ENCODE measurements at regions of chr17 and their contacts with region 1.

Region 1: GRCh38 chr17:42527273-42527703 is 8.8 kb upstream of the NAGLU start:
- DNase-seq: peak; percentile 90
- H3K4me3 ChIP-seq: no peak overlapping the region
- H3K27ac ChIP-seq: peak overlapping the region; percentile 32
- H3K4me1 ChIP-seq: peaks cover 19% of the 10 kb centered on the region
- H3K27me3 ChIP-seq: no peaks in the 10 kb centered on the region
- CTCF ChIP-seq: peak; percentile 85 to 86
- POLR2A ChIP-seq: no peak

Region 2: DNA sequence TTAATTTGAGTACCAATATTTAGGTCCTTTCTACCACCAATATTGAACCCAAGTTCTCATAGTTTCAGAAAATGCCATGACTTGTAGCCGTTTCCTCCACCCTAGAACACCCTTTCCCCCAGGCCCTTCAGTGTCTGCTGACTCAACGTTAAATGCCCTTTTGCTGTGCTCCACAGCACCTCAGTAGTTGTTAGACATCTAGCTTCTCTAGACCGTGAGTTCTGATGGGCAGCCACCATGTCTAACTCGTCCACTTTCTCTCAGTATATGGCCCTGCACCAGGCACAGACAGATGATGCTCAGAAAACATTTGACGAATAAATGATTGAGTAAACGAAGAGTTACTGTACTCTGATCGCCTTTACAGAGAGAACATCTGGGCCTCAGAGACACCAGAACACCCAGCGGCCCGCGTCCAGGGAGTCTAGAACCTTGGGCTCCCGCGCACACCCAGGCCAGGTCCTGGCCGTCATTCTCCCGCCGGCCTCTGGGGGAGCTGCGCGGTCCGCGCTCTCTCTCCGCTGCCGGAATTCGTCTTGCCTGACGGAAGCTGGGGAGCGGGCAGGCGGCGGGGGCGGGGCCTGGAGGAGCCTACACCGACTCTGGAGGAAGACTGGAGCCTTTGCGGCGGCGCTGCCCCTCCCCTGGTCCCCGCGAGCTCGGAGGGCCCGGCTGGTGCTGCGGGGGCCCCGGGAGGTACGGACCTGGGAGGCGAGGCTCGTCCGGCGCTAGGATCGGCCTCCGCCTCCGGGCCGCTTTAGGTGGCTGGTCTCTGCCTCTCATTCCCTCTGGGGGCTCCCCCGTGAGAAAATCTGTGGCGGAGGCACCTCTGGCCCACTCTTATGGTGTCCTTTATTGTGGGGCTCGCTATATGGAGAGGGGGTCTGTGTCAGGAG is 507.5 kb before region 1 on chr17 and contains the start of gene NKIRAS2:
- CTCF ChIA-PET with region 1: no interaction called
- POLR2A ChIA-PET with region 1: no interaction called
- dilution Hi-C with region 1: no loop called
- intact Hi-C with region 1: loop called (anchors 10 kb)
- DNase-seq: peak; percentile 89
- H3K4me3 ChIP-seq: peak within 1 kb of the TSS; percentile 89 to 96 (median 93)
- H3K27ac ChIP-seq: peak within 1 kb of the TSS; percentile 86
- H3K4me1 ChIP-seq: peaks cover 24% of the 10 kb centered on the region
- H3K27me3 ChIP-seq: no peaks in the 10 kb centered on the region
- CTCF ChIP-seq: peak; percentile 91 to 96
- POLR2A ChIP-seq: peak; percentile 92
- total RNA-seq, gene NKIRAS2: 57.3 and 60.4 TPM in 2 replicates

Region 3: GRCh38 chr17:42132941-42133340 is 394.3 kb before region 1 on chr17:
- CTCF ChIA-PET with region 1: no interaction called
- POLR2A ChIA-PET with region 1: no interaction called
- dilution Hi-C with region 1: no loop called
- intact Hi-C with region 1: loop called (anchors 10 kb)
- DNase-seq: peak; percentile 48
- H3K4me3 ChIP-seq: peak overlapping the region in 1 of 3 experiments; percentile 44
- H3K27ac ChIP-seq: peak overlapping the region; percentile 71
- H3K4me1 ChIP-seq: peaks cover 79% of the 10 kb centered on the region
- H3K27me3 ChIP-seq: no peaks in the 10 kb centered on the region
- CTCF ChIP-seq: no peak
- POLR2A ChIP-seq: no peak

Region 4: DNA sequence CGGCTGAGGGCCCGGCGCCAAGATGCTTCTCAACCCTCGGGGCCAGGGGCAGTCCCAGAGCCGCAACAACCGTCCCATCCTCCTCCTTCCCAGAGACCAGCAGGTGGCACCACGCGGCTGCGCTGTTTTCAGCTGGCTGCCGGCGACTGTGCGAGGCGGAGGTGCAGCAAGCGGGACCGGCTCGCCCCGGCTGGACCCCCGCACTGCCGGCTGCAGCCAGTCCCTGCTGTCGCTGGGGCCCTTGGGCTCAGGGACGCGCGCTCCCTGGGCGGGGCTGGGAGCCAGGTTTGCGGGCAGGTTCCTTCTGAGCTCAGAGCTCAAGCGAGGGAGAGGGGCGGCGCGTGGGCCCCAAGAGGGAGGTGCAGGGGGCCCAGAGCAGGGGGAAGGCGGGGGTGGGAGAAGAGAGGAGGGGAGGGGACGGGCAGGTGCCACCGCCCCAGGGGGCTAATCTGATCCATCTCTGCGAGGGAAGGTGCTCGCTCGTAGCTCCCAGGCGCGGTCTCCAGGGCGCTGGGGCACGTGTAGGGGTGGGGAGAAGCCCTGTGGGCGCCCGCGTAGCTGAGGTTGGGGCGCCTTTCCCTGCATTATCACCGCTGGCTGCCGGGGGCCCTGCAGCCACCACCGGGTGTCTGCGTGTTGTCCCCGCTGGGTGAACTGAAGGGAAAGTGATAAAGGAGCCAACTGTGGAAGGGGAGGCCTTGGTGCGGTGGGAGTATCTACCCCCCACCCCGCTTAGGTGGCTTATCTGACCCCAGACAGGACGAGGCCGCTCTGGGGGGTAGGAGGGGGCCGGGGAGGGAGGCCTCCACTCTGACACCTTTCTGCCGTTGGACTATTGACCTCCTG is 214.8 kb before region 1 on chr17:
- CTCF ChIA-PET with region 1: interaction called, 50 read pairs
- POLR2A ChIA-PET with region 1: interaction called, 4 read pairs
- dilution Hi-C with region 1: no loop called
- intact Hi-C with region 1: no loop called
- DNase-seq: peak; percentile 85
- H3K4me3 ChIP-seq: no peak overlapping the region
- H3K27ac ChIP-seq: no peak overlapping the region
- H3K4me1 ChIP-seq: peaks cover 43% of the 10 kb centered on the region
- H3K27me3 ChIP-seq: no peaks in the 10 kb centered on the region
- CTCF ChIP-seq: peak; percentile 67 to 88
- POLR2A ChIP-seq: no peak

Region 5: GRCh38 chr17:42405963-42406495 is 121.3 kb before region 1 on chr17:
- CTCF ChIA-PET with region 1: interaction called, 59 read pairs
- POLR2A ChIA-PET with region 1: interaction called, 5 read pairs
- dilution Hi-C with region 1: no loop called
- intact Hi-C with region 1: loop called (anchors 1 kb)
- DNase-seq: peak; percentile 80
- H3K4me3 ChIP-seq: no peak overlapping the region
- H3K27ac ChIP-seq: no peak overlapping the region
- H3K4me1 ChIP-seq: peaks cover 58% of the 10 kb centered on the region
- H3K27me3 ChIP-seq: no peaks in the 10 kb centered on the region
- CTCF ChIP-seq: peak; percentile 75 to 85
- POLR2A ChIP-seq: no peak

Region 6: DNA sequence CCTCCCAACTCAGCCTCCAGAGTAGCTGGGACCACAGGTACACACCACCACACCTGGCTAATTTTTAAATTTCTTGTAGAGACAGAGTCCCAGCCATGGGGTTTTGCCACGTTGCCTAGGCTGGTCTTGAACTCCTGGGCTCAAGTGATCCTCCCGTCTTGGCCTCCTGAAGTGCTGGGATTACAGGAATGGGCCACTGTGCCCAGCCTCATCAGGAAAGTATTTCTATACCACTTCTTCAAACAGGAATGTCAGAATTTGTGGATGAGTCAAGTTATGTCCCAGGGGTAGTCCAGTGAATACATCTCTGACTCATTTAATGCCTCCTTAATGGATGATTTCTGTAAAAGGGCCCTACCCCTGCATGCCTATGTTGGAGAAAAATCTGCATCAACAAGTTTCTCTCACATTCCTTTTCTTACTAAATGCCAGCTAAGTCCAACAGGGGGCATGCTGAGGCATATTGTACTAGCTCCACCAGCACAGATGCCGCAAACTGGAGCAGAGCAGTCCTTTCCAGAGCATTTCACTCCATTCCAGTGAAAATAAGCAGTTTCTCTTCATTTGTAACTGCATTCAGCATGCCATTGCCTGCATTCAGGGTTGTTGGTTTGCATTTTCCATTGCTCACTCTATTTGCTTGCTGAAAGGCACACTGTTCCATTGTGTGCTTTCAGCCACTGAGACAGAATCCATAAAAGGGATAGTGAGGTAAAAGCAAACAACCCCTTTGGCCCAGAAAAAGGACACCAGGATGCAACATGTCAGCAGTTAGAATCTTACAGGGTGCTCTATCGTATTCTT is 98.9 kb before region 1 on chr17:
- CTCF ChIA-PET with region 1: interaction called, 23 read pairs
- POLR2A ChIA-PET with region 1: interaction called, 6 read pairs
- dilution Hi-C with region 1: no loop called
- intact Hi-C with region 1: loop called (anchors 1 kb)
- DNase-seq: peak; percentile 85
- H3K4me3 ChIP-seq: no peak overlapping the region
- H3K27ac ChIP-seq: no peak overlapping the region
- H3K4me1 ChIP-seq: peaks cover 5% of the 10 kb centered on the region
- H3K27me3 ChIP-seq: no peaks in the 10 kb centered on the region
- CTCF ChIP-seq: peak; percentile 71 to 76
- POLR2A ChIP-seq: no peak

Region 7: GRCh38 chr17:42609182-42609813 is 82.0 kb after region 1 on chr17 and contains the starts of genes RETREG3 and TUBG1:
- CTCF ChIA-PET with region 1: no interaction called
- POLR2A ChIA-PET with region 1: no interaction called
- dilution Hi-C with region 1: no loop called
- intact Hi-C with region 1: no loop called
- DNase-seq: peak; percentile 99
- H3K4me3 ChIP-seq: peak within 1 kb of the TSS; percentile 73 to 81 (median 79)
- H3K27ac ChIP-seq: peak within 1 kb of the TSS; percentile 69
- H3K4me1 ChIP-seq: peaks cover 11% of the 10 kb centered on the region
- H3K27me3 ChIP-seq: no peaks in the 10 kb centered on the region
- CTCF ChIP-seq: peak; percentile 39 to 72
- POLR2A ChIP-seq: peak; percentile 89
- total RNA-seq, gene RETREG3: 52.3 and 53.4 TPM in 2 replicates
- total RNA-seq, gene TUBG1: 96.9 and 102 TPM in 2 replicates